Uterus (tissue), 4 donors: ENCODE measurements at regions of chr15 and their contacts with region 1.

Region 1: DNA sequence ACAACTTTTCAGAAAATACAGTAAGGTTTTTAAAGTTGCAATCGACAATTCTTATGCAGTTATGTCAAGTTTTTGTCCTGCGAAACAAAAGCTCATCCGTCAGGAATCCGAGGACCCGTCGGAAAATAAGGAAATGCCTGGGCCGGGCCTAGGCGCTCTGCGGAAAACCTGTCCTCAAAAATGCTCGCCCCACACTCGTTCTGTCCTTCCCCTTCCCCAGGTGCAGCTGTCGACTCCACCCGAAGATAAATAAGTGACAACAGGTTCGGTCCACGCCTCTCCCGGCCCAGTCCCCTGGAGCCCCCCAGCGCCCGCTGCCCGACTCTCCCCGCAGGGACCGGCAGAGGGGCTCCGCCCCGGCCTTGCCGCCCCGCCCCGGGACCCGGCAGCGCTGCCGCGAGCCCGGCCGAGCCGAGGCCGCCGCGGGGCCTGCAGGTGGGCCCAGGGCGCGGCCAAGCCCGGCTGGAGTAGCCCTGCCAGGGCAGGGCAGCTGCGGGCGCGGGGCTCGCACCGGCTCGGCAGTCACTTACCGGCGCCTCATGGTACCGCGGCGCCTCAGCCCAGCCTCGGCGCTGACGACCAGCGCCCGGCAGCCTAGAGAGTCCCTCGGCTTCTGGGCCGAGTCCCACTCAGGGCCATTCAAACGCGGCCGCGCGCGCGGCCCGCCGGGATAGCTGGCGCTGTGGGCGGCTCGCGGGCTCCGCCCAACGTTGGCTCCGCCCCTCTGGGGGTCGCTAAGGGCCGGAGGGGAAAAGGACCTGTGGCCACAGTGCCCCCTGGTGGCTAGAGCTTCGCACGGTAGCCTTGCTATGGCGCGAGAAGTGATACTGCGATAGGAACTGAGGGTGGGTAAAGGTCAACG is at the start of gene KATNBL1:
- DNase-seq: peak; percentile 95 to 97
- H3K4me3 ChIP-seq: peak within 1 kb of the TSS; percentile 66 to 77
- H3K27ac ChIP-seq: peak within 1 kb of the TSS; percentile 86 to 91
- H3K4me1 ChIP-seq: no peaks in the 10 kb centered on the region
- H3K27me3 ChIP-seq: no peaks in the 10 kb centered on the region
- CTCF ChIP-seq: peak; percentile 92 to 98 (median 94)
- POLR2A ChIP-seq: peak; percentile 92 to 96
- total RNA-seq, gene KATNBL1: 75.5 to 116 (median 97.8) TPM

Region 2: GRCh38 chr15:33801954-33802353 is 407.7 kb before region 1 on chr15:
- intact Hi-C with region 1: no loop called
- DNase-seq: no peak
- H3K4me3 ChIP-seq: no peak overlapping the region
- H3K27ac ChIP-seq: no peak overlapping the region
- H3K4me1 ChIP-seq: no peaks in the 10 kb centered on the region
- H3K27me3 ChIP-seq: no peaks in the 10 kb centered on the region
- CTCF ChIP-seq: no peak
- POLR2A ChIP-seq: no peak

Region 3: DNA sequence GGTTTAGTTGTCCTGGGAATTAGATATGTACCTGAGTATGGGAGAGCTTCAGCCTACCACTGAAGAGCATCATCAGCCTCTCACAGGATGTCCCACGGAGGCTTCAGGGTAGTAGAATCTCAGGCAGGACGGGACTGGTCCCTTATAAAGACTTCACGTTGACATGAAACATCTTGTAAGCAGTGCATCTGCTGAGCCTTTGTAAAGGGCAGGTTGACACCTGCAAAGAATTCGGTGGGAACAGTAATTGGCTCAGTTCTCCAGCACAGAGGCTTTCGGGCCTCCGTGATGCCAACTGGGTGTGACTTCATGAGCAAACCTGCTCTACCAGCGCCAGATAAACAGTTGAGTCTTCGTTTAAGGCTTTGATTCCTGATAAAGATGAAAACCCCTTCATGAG is 143.7 kb before region 1 on chr15:
- intact Hi-C with region 1: loop called (anchors 10 kb)
- DNase-seq: no peak
- H3K4me3 ChIP-seq: no peak overlapping the region
- H3K27ac ChIP-seq: no peak overlapping the region
- H3K4me1 ChIP-seq: no peaks in the 10 kb centered on the region
- H3K27me3 ChIP-seq: no peaks in the 10 kb centered on the region
- CTCF ChIP-seq: no peak
- POLR2A ChIP-seq: no peak

Region 4: DNA sequence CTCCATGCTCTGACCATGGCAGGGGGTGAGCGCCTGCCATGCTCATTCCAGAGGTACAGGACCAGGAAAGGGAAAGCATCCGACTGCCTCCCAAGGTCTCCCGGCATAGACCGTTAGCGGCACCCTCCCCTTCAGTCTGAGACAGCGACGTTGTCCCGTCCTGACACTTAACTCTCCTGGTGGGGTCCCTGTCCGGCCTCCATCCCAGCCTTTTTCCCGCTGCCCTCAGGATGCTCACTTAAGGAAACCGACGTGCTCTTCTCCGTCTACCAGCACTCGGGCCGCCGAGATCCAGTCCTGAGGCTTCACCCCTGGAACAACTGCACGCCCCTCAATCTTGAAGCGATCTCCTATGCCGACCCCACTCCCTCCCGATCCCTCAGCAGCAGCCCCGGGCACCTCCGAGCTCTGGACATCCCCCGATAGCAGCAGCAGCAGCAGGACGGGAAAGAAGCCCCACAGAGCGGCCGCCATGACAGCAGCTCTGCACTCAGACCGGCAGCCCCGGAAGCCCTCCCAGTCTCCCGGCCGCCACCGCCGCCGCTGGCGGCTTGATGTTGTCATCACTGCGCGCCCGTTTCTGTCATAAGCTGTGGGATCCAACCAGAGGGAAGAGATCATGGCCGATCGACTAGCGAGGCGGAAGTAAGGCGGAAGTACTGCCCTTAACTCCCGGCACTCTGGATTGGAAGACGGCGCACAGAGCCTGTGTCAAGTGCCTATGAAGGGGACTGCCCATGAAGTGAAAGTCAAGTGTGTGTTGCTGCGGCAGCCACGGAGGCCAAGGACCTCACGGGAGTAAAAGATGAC is 108.1 kb before region 1 on chr15 and contains the starts of genes EMC7 and PGBD4:
- intact Hi-C with region 1: loop called (anchors 10 kb)
- DNase-seq: peak; percentile 99
- H3K4me3 ChIP-seq: peak within 1 kb of the TSS; percentile 88 to 93
- H3K27ac ChIP-seq: peak within 1 kb of the TSS; percentile 85
- H3K4me1 ChIP-seq: peaks cover 0 to 6% of the 10 kb centered on the region in 2 donors
- H3K27me3 ChIP-seq: no peaks in the 10 kb centered on the region
- CTCF ChIP-seq: peak in 1 of 4 experiments; percentile 33
- POLR2A ChIP-seq: peak; percentile 56 to 62
- total RNA-seq, gene EMC7: 12.4 to 45.8 (median 27.2) TPM
- total RNA-seq, gene PGBD4: 1.4 to 4.1 (median 1.6) TPM